ENCODE measurements at regions of chr2 and their contacts with region 1.

Region 1: GRCh38 chr2:55431982-55432627 is 12.4 kb upstream of the CCDC88A start:
- DNase-seq: peak; percentile 51
- H3K4me3 Mint-ChIP-seq: no peak overlapping the region
- H3K27ac Mint-ChIP-seq: no peak overlapping the region
- H3K4me1 Mint-ChIP-seq: no peaks in the 10 kb centered on the region
- H3K27me3 Mint-ChIP-seq: no peaks in the 10 kb centered on the region
- CTCF ChIP-seq: peak; percentile 52

Region 2: GRCh38 chr2:55232084-55232862 is 199.8 kb before region 1 on chr2 and contains the starts of genes CLHC1 and RPS27A:
- CTCF ChIA-PET with region 1: no interaction called
- POLR2A ChIA-PET with region 1: no interaction called
- intact Hi-C with region 1: loop called (anchors 5 kb)
- DNase-seq: peak; percentile 97
- H3K4me3 Mint-ChIP-seq: peak within 1 kb of the TSS; percentile 87
- H3K27ac Mint-ChIP-seq: peak within 1 kb of the TSS; percentile 96
- H3K4me1 Mint-ChIP-seq: peaks cover 36% of the 10 kb centered on the region
- H3K27me3 Mint-ChIP-seq: no peaks in the 10 kb centered on the region
- CTCF ChIP-seq: no peak
- total RNA-seq, gene CLHC1: 32.8 and 35.4 TPM in 2 replicates
- total RNA-seq, gene RPS27A: 1,343 and 1,536 TPM in 2 replicates

Region 3: GRCh38 chr2:55311444-55311870 is 120.6 kb before region 1 on chr2:
- CTCF ChIA-PET with region 1: interaction called, 5 read pairs
- POLR2A ChIA-PET with region 1: interaction called, 4 read pairs
- intact Hi-C with region 1: loop called (anchors 1 kb)
- DNase-seq: peak; percentile 59
- H3K4me3 Mint-ChIP-seq: no peak overlapping the region
- H3K27ac Mint-ChIP-seq: no peak overlapping the region
- H3K4me1 Mint-ChIP-seq: peaks cover 15% of the 10 kb centered on the region
- H3K27me3 Mint-ChIP-seq: no peaks in the 10 kb centered on the region
- CTCF ChIP-seq: peak; percentile 45

Region 4: DNA sequence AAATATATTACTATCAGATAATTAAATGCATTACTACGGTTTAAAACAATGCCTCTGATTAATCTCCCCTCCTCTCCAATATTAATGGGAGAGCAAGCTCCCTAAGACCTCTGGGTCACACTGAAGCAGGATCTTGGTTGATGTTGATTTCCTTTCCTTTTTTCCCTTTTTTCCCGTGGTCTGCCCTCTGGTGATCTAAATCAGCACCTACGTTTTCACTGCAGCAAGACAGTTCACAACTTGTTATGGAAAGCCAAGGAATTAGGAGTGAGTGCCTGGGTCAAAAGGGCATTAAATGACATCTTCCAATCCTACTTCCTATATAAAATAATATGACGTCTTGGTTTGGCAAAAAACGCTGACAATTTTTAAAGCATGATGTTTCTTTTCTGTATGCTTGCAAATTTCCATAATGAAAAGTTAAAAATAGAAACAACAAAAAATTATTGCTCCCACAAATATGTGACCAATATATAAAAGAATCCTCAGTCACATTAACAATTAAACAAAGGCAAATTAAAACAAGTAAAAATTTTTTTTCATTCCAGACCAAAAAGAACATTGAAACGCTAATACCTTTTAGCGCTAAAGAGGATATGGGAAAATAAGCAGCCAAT is 79.5 kb after region 1 on chr2:
- CTCF ChIA-PET with region 1: interaction called, 7 read pairs
- POLR2A ChIA-PET with region 1: interaction called, 3 read pairs
- intact Hi-C with region 1: loop called (anchors 1 kb)
- DNase-seq: peak; percentile 61
- H3K4me3 Mint-ChIP-seq: no peak overlapping the region
- H3K27ac Mint-ChIP-seq: no peak overlapping the region
- H3K4me1 Mint-ChIP-seq: peaks cover 6% of the 10 kb centered on the region
- H3K27me3 Mint-ChIP-seq: no peaks in the 10 kb centered on the region
- CTCF ChIP-seq: peak; percentile 34

Region 5: DNA sequence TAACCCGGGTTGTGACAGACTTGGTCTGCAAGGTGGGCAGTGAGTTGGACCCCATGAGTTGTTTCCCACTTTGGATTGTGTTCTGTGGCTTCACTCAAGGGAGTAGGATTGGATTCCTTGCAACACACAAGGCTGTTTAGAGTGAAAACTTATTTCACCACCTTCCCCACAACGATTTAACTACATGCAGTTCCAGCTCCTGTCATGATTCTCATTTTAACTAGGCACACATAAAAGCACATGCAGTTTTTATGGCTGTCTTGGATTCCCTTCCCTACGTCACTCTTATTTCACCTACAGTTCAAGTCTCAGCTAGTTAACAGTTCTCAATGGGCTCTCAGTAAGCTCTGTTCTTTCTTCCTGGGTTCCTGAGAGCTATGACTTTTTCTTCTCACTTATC is 475.6 kb after region 1 on chr2:
- CTCF ChIA-PET with region 1: no interaction called
- POLR2A ChIA-PET with region 1: no interaction called
- intact Hi-C with region 1: no loop called
- DNase-seq: no peak
- H3K4me3 Mint-ChIP-seq: no peak overlapping the region
- H3K27ac Mint-ChIP-seq: no peak overlapping the region
- H3K4me1 Mint-ChIP-seq: peaks cover 5% of the 10 kb centered on the region
- H3K27me3 Mint-ChIP-seq: no peaks in the 10 kb centered on the region
- CTCF ChIP-seq: no peak